CD4-positive, alpha-beta memory T cell (primary cell): ENCODE measurements at regions of chr5 and their contacts with region 1.

Region 1: GRCh38 chr5:100430268-100431195 is 104.6 kb upstream of the FAM174A start:
- DNase-seq: peak; percentile 16 to 29 (median 24)
- H3K4me3 ChIP-seq: no peak overlapping the region
- H3K4me3 Mint-ChIP-seq: no peak overlapping the region
- H3K27ac ChIP-seq: no peak overlapping the region
- H3K27ac Mint-ChIP-seq: no peak overlapping the region
- H3K4me1 ChIP-seq: no peaks in the 10 kb centered on the region
- H3K4me1 Mint-ChIP-seq: no peaks in the 10 kb centered on the region
- H3K27me3 ChIP-seq: no peaks in the 10 kb centered on the region
- H3K27me3 Mint-ChIP-seq: no peaks in the 10 kb centered on the region

Region 2: DNA sequence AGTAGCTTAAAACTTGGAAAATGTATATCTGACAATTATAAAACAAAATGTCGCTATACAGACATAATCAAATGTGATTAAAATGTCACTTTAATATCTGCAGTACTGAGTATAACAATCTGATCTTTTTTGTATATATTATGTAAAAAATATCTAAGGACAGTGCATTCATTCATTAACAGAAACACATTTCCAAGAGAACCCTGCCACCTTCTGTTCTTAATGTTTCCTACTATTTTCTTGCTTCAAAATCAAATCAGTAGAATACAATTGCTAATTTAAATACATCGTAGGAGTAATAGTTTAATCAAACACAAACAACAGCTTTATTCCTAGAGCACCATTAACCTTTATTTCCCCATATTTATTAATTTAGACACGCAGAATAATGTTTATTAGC is 615.2 kb after region 1 on chr5:
- CTCF ChIA-PET with region 1: interaction called, 3 read pairs
- POLR2A ChIA-PET with region 1: no interaction called
- intact Hi-C with region 1: loop called (anchors 1 kb)
- DNase-seq: peak in 4 of 5 donors; percentile 15 to 33 (median 27)
- H3K4me3 ChIP-seq: no peak overlapping the region
- H3K4me3 Mint-ChIP-seq: no peak overlapping the region
- H3K27ac ChIP-seq: no peak overlapping the region
- H3K27ac Mint-ChIP-seq: no peak overlapping the region
- H3K4me1 ChIP-seq: peaks cover 9% of the 10 kb centered on the region
- H3K4me1 Mint-ChIP-seq: peaks cover 5 to 11% (median 7%) of the 10 kb centered on the region in 4 donors
- H3K27me3 ChIP-seq: no peaks in the 10 kb centered on the region
- H3K27me3 Mint-ChIP-seq: no peaks in the 10 kb centered on the region

Region 3: GRCh38 chr5:101390151-101390908 is 959.8 kb after region 1 on chr5:
- CTCF ChIA-PET with region 1: interaction called, 10 read pairs
- POLR2A ChIA-PET with region 1: no interaction called
- intact Hi-C with region 1: no loop called
- DNase-seq: peak in 3 of 5 donors; percentile 7 to 13 (median 9)
- H3K4me3 ChIP-seq: no peak overlapping the region
- H3K4me3 Mint-ChIP-seq: no peak overlapping the region
- H3K27ac ChIP-seq: no peak overlapping the region
- H3K27ac Mint-ChIP-seq: no peak overlapping the region
- H3K4me1 ChIP-seq: no peaks in the 10 kb centered on the region
- H3K4me1 Mint-ChIP-seq: no peaks in the 10 kb centered on the region
- H3K27me3 ChIP-seq: no peaks in the 10 kb centered on the region
- H3K27me3 Mint-ChIP-seq: no peaks in the 10 kb centered on the region

Region 4: DNA sequence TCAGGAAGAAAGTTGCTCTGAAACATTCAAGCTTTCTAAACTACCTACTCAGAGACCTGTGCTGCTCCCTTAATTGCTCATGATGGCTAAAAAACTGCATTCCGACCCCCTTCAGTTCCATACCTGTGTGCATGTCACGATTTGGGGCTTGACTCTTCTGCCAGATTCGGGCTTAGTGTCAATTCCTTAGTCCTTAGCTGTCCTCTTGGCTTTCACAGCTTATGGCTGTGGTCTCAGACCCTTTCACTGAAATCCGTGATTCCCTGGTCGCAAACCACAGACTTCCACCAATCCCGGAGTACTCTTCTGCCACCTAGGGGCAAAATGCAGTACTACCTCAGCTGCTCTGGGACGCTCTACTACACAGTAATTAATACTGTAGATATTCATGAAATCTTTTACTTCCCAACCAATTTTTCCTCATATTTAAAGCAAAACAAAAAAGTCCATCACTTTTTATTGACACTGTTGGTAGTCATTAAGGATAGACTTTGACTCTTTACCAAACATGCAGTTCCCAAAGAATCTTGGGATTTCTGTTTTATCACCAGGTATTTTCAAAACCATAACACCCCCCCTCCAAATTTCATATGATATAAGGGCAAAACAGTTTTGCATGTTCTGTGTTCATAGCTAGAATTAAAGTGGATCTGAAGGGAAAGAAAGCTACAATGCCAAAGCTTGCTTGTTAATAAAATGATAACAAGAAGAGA is 1248.1 kb after region 1 on chr5:
- CTCF ChIA-PET with region 1: interaction called, 6 read pairs
- POLR2A ChIA-PET with region 1: no interaction called
- intact Hi-C with region 1: loop called (anchors 1 kb)
- DNase-seq: peak in 3 of 5 donors; percentile 8 to 15 (median 12)
- H3K4me3 ChIP-seq: no peak overlapping the region
- H3K4me3 Mint-ChIP-seq: no peak overlapping the region
- H3K27ac ChIP-seq: no peak overlapping the region
- H3K27ac Mint-ChIP-seq: no peak overlapping the region
- H3K4me1 ChIP-seq: no peaks in the 10 kb centered on the region
- H3K4me1 Mint-ChIP-seq: no peaks in the 10 kb centered on the region
- H3K27me3 ChIP-seq: no peaks in the 10 kb centered on the region
- H3K27me3 Mint-ChIP-seq: no peaks in the 10 kb centered on the region

Region 5: DNA sequence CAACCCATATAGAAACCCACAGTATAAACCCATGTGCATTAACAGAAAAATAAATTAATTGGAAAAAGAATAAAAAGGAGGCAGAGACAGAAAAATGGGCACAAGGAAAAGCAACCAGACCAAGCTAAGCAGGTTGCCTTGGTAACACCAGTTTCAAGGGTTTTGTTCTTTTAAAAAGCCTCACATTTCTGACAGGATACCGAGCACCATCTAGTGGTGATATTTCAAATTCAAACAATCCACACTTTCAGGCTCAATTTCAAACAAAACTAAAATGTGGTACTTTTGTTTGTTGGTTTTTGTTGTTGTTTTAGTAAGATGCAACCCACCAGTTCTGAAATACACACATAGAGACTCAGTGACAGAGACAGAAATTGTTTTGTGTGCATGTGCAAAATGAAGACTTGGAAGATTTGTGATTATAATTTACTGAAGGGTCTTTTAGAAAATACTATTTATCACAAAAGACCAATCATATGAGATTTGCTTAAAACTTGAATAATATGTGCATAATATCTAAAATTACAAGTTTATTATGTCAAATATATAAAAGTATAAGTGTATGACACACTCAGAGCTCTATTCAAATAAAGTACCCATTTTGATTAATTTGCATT is 1547.3 kb after region 1 on chr5:
- CTCF ChIA-PET with region 1: no interaction called
- POLR2A ChIA-PET with region 1: no interaction called
- intact Hi-C with region 1: loop called (anchors 5 kb)
- DNase-seq: peak in 3 of 5 donors; percentile 2 to 18 (median 7)
- H3K4me3 ChIP-seq: no peak overlapping the region
- H3K4me3 Mint-ChIP-seq: no peak overlapping the region
- H3K27ac ChIP-seq: no peak overlapping the region
- H3K27ac Mint-ChIP-seq: no peak overlapping the region
- H3K4me1 ChIP-seq: no peaks in the 10 kb centered on the region
- H3K4me1 Mint-ChIP-seq: no peaks in the 10 kb centered on the region
- H3K27me3 ChIP-seq: no peaks in the 10 kb centered on the region
- H3K27me3 Mint-ChIP-seq: no peaks in the 10 kb centered on the region

Region 6: DNA sequence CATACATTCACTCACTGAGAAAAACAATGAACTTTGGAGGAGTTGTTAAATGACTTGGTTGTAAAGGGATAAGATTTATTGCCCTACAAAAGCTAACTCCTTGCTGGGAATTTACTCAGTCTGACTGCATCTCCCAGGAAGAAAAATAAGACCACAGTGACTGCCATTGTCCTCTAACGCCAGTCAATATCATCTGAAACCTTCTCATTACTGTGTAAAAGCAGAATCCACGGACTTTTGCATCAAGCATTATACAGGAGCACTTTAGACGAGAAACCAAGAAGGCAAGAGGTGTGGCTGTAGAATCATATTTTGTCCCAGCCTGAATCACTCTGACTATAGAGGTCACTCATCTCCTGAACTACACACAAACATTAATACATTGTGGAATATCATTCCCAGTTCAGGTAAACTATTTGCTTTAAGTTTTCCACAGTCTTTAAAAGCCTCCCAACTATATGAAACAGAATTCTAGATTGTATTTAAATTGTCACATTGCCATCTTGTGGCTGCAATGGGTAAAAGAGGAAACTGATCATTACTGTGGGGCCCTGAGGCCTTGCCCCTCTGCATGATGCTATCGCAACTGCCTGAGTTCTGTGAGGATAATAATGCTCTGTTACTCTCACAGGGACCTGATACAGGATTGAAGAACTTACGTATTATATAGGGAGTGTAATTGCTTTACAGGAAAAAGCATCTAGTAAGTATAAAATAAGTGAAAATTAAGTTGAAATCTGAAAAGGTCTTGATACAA is 1722.6 kb after region 1 on chr5:
- CTCF ChIA-PET with region 1: no interaction called
- POLR2A ChIA-PET with region 1: no interaction called
- intact Hi-C with region 1: loop called (anchors 10 kb)
- DNase-seq: peak in 2 of 5 donors; percentile 1 to 31
- H3K4me3 ChIP-seq: no peak overlapping the region
- H3K4me3 Mint-ChIP-seq: peak overlapping the region in 1 of 8 donors; percentile 52
- H3K27ac ChIP-seq: no peak overlapping the region
- H3K27ac Mint-ChIP-seq: no peak overlapping the region
- H3K4me1 ChIP-seq: no peaks in the 10 kb centered on the region
- H3K4me1 Mint-ChIP-seq: no peaks in the 10 kb centered on the region
- H3K27me3 ChIP-seq: no peaks in the 10 kb centered on the region
- H3K27me3 Mint-ChIP-seq: no peaks in the 10 kb centered on the region

Region 7: GRCh38 chr5:102223542-102224477 is 1793.3 kb after region 1 on chr5:
- CTCF ChIA-PET with region 1: no interaction called
- POLR2A ChIA-PET with region 1: no interaction called
- intact Hi-C with region 1: loop called (anchors 5 kb)
- DNase-seq: peak in 4 of 5 donors; percentile 18 to 53 (median 32)
- H3K4me3 ChIP-seq: no peak overlapping the region
- H3K4me3 Mint-ChIP-seq: no peak overlapping the region
- H3K27ac ChIP-seq: no peak overlapping the region
- H3K27ac Mint-ChIP-seq: no peak overlapping the region
- H3K4me1 ChIP-seq: no peaks in the 10 kb centered on the region
- H3K4me1 Mint-ChIP-seq: no peaks in the 10 kb centered on the region
- H3K27me3 ChIP-seq: no peaks in the 10 kb centered on the region
- H3K27me3 Mint-ChIP-seq: peaks cover 0 to 2% of the 10 kb centered on the region in 2 donors